ENCODE measurements at regions of chr2 and their contacts with region 1.

Region 1: DNA sequence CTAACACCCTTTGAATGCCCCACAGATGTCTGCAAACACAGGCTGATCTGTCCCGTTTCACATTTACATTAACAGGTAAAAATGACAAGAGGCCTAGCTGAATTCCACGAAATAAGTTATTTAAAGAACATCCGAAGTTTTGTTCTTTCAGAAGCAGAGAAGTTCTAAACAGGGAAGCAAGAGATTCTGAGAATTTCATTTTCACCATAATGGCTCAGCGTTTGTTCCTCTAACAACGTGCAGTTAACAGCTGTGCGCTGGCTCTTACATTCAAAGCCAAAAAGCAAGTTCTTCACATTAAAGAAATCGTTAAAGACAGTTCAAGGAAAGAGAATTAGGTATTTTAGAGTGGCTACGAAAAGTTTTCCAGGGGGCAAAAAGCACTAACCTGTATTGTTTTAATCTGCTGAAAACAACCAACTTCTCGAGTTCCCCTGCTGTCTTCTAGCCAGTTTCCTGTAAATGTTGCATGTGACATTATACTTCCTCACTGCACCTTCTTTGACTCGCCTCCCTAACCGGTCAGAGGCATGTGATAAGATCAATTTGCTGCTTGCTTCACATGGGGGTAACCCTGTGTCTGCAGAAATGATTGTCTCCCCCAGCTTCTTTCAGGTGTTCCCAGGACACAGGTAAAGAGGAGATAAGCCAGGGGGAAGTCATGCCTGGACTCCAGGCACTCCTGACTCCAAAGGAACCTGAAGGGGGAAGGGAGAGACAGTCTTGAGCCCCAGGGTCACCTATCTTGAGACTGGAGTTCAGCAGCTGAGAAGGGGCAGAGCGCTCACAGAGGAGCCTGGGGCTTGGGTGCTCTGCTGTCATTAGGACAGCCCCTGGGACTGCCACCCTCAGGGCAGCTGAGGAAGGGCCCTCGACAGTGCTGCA is 36.8 kb upstream of the WIPF1 start:
- DNase-seq: peak; percentile 74
- ATAC-seq: peak; percentile 81
- H3K4me3 Mint-ChIP-seq: peak overlapping the region; percentile 85
- H3K27ac Mint-ChIP-seq: peak overlapping the region; percentile 93
- H3K4me1 Mint-ChIP-seq: peaks cover 73% of the 10 kb centered on the region
- H3K27me3 Mint-ChIP-seq: no peaks in the 10 kb centered on the region

Region 2: GRCh38 chr2:174603280-174603679 is 31.1 kb before region 1 on chr2:
- CTCF ChIA-PET with region 1: interaction called, 16 read pairs
- POLR2A ChIA-PET with region 1: interaction called, 186 read pairs
- DNase-seq: peak; percentile 68
- ATAC-seq: peak; percentile 54
- H3K4me3 Mint-ChIP-seq: no peak overlapping the region
- H3K27ac Mint-ChIP-seq: no peak overlapping the region
- H3K4me1 Mint-ChIP-seq: peaks cover 88% of the 10 kb centered on the region
- H3K27me3 Mint-ChIP-seq: no peaks in the 10 kb centered on the region

Region 3: GRCh38 chr2:174623690-174624089 is 10.7 kb before region 1 on chr2:
- CTCF ChIA-PET with region 1: interaction called, 27 read pairs
- POLR2A ChIA-PET with region 1: interaction called, 14 read pairs
- DNase-seq: no peak
- ATAC-seq: no peak
- H3K4me3 Mint-ChIP-seq: no peak overlapping the region
- H3K27ac Mint-ChIP-seq: peak overlapping the region; percentile 55
- H3K4me1 Mint-ChIP-seq: peaks cover 72% of the 10 kb centered on the region
- H3K27me3 Mint-ChIP-seq: no peaks in the 10 kb centered on the region

Region 4: DNA sequence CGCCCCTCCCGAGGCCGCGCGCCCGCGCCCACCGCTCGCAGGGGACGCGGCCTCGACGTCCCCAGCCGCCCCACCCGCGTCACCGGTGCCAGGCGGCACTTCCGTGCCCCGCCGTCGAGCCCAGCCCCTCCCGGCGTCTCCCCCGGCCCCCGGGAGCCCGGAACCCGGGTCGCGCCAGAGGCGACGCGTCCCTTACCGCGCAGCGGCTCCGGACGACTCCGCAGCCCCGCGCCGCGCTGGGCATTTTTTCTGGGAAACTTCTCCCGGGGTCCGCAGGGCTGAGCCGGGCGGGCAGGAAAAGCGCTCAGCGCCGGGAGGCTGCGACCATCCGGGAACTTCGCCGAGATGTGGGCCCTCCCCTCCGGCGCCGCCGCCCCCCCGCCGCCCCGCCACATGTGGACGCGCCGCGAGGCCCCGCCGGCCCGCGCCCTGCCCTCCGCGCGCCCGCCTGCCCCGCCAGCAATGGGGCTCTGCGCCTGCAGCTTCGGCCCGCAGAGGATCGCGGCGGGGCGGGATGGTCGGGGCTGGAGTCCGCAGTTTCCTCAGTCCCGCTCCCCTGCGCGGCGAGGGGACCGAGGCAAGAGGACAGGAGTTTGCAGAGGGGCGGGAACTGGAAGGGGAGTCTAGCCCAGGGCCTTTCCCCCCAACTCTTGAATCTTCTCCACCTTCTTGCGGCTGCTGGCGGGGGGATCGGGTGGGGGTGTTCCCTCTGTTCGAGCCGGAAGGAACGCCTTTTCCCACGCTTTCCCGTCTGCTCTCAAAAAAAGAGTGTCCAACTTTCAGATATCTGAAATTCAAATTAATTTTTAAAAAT is 48.4 kb after region 1 on chr2:
- CTCF ChIA-PET with region 1: interaction called, 81 read pairs
- POLR2A ChIA-PET with region 1: interaction called, 55 read pairs
- DNase-seq: peak; percentile 70
- ATAC-seq: peak; percentile 70
- H3K4me3 Mint-ChIP-seq: peak overlapping the region; percentile 81
- H3K27ac Mint-ChIP-seq: peak overlapping the region; percentile 88
- H3K4me1 Mint-ChIP-seq: peaks cover 70% of the 10 kb centered on the region
- H3K27me3 Mint-ChIP-seq: no peaks in the 10 kb centered on the region

Region 5: GRCh38 chr2:174771631-174772471 is 137.5 kb after region 1 on chr2:
- CTCF ChIA-PET with region 1: no interaction called
- POLR2A ChIA-PET with region 1: no interaction called
- DNase-seq: peak; percentile 65
- ATAC-seq: peak; percentile 75
- H3K4me3 Mint-ChIP-seq: no peak overlapping the region
- H3K27ac Mint-ChIP-seq: no peak overlapping the region
- H3K4me1 Mint-ChIP-seq: peaks cover 18% of the 10 kb centered on the region
- H3K27me3 Mint-ChIP-seq: peaks cover 4% of the 10 kb centered on the region

Measured in activated CD8-positive, alpha-beta T cell treated with anti-CD3 and anti-CD28 coated beads, Interleukin-2, amount 10 ng/mL, durations not matched to agents 7 days and 5 days (primary cell).